ENCODE measurements at regions of chr6 and their contacts with region 1.

Region 1: DNA sequence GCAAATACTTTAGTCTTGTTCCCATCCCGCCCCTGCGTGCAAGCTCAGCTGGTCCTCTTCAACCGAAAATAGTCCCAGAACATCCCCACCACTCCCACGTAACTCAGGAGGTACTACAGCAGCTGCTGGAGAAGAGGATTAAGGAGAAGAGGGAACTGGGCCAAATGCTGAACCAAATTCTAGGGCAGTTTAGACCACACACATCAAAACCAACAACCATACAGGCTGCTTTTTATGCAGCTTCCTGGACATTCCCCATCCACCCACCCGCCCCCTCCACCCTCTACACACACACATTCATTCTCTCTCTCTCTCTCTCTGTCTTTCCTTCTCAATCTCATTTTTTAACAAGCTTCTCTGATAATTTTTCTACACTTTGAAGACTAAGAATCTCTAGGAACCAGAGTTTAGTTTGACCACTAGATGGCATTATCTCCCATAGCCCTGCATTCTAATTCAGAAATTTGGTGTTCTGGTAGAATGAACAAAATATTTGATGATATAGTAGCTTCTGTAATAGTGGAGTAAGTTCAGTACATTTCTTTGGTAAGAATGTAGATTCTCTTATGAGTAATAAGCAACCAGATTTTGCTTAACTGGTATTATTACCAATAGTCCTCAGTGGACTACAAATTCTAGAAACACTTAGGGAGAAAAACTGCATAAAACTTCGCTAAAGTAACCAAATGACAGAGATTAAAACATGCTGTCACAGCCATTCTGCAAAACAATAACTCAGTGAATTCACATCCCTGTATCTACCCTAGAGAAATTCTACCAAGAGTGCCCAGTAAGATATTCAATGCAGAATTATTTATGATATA is 52.1 kb upstream of the BEND6 start:
- DNase-seq: peak; percentile 59
- H3K4me3 ChIP-seq: no peak overlapping the region; the same call in 1 of the 2 replicates
- H3K27ac ChIP-seq: peak overlapping the region; percentile 33
- H3K27me3 ChIP-seq: no peaks in the 10 kb centered on the region
- CTCF ChIP-seq: peak; percentile 77

Region 2: DNA sequence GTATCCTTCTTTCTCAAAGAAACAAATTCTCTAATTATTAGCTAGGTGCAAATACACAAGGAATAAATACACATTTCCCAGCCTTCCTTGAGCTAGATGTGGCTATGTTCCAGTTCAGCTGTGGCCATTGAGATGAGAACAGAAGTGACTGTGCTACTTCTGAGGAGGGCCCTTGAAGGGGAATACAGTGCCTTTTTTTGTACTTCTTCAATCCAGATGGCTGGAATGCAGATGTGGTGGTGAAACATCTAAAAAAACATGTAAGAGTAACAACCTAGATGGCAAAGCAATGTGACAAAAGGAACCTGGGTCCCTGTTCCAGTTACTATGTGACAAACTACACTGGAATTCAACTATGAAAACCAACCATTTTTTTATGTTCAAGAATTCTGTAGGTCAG is 144.7 kb before region 1 on chr6:
- CTCF ChIA-PET with region 1: no interaction called
- POLR2A ChIA-PET with region 1: no interaction called
- DNase-seq: no peak
- H3K4me3 ChIP-seq: no peak overlapping the region
- H3K27ac ChIP-seq: no peak overlapping the region
- H3K27me3 ChIP-seq: no peaks in the 10 kb centered on the region
- CTCF ChIP-seq: no peak

Region 3: DNA sequence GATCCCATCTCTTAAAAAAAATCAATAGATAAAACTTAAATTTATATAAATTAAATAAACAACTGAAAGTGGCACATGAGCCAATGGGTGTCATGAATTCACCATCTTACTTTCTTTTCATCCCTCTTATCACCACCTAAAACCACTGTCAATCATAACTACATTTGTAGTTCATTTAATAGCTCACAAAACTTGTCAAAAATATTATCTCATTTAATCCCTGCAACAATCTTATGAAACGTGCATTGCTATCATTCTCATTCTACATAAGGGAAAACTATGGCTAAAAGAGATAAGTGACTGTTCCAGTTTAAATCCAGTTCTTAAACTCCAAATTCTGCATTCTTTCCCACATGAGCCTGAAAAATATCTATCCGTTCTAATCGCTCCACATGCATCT is 28.5 kb before region 1 on chr6:
- CTCF ChIA-PET with region 1: interaction called, 10 read pairs
- POLR2A ChIA-PET with region 1: no interaction called
- DNase-seq: no peak
- H3K4me3 ChIP-seq: no peak overlapping the region
- H3K27ac ChIP-seq: no peak overlapping the region
- H3K27me3 ChIP-seq: no peaks in the 10 kb centered on the region
- CTCF ChIP-seq: no peak

Region 4: GRCh38 chr6:56927538-56928453 is 24.9 kb after region 1 on chr6:
- CTCF ChIA-PET with region 1: interaction called, 24 read pairs
- POLR2A ChIA-PET with region 1: no interaction called
- DNase-seq: no peak
- H3K4me3 ChIP-seq: no peak overlapping the region
- H3K27ac ChIP-seq: no peak overlapping the region
- H3K27me3 ChIP-seq: no peaks in the 10 kb centered on the region
- CTCF ChIP-seq: 0 out of 2 replicates have a peak, but pooled peaks have one; percentile 7

Region 5: GRCh38 chr6:56955171-56956045 is 52.6 kb after region 1 on chr6:
- CTCF ChIA-PET with region 1: interaction called, 33 read pairs
- POLR2A ChIA-PET with region 1: interaction called, 4 read pairs
- DNase-seq: peak; percentile 79
- H3K4me3 ChIP-seq: peak overlapping the region; percentile 73
- H3K27ac ChIP-seq: peak overlapping the region; percentile 79
- H3K27me3 ChIP-seq: no peaks in the 10 kb centered on the region
- CTCF ChIP-seq: peak; percentile 87

Region 6: DNA sequence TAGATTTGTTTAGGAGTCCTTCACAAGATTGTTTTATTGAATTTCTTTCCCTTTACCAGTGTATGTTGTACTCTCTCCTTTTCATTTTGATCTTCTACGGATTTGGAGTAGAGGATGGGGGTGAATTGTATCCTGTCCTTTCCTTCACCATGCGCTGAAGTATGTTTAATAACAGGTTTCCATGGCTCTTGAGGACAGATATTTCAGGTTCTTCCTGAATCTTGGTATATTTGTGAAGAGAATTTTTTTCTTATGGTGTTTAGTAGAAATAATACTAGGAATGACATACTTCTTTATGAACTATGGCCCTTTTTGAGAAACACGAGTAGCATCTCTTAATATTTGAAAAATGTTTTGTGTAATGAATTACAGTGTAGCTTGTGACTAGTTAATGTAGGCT is 189.0 kb after region 1 on chr6:
- CTCF ChIA-PET with region 1: interaction called, 10 read pairs
- POLR2A ChIA-PET with region 1: no interaction called
- DNase-seq: no peak
- H3K4me3 ChIP-seq: peak overlapping the region; percentile 41
- H3K27ac ChIP-seq: no peak overlapping the region
- H3K27me3 ChIP-seq: no peaks in the 10 kb centered on the region
- CTCF ChIP-seq: no peak

Measured in AG04450 (cell line).